ENCODE measurements at regions of chr1 and their contacts with region 1.

Region 1: GRCh38 chr1:112390775-112391602 is 5.0 kb upstream of the CTTNBP2NL start:
- DNase-seq: peak; percentile 84
- H3K4me3 ChIP-seq: peak overlapping the region; percentile 43 to 65
- H3K27ac ChIP-seq: peak overlapping the region; percentile 31 to 73; a peak in 3 of 4 replicates
- H3K4me1 ChIP-seq: peaks cover 10 to 17% of the 10 kb centered on the region in 2 experiments
- H3K27me3 ChIP-seq: no peaks in the 10 kb centered on the region
- CTCF ChIP-seq: peak; percentile 97
- EP300 ChIP-seq: no peak
- RAD21 ChIP-seq: peak; percentile 96

Region 2: GRCh38 chr1:112406771-112407170 is 15.8 kb after region 1 on chr1:
- CTCF ChIA-PET with region 1: interaction called, 12 read pairs
- POLR2A ChIA-PET with region 1: interaction called, 3 read pairs
- DNase-seq: no peak
- H3K4me3 ChIP-seq: no peak overlapping the region
- H3K27ac ChIP-seq: no peak overlapping the region
- H3K4me1 ChIP-seq: peaks cover 0 to 37% of the 10 kb centered on the region in 2 experiments; a peak in 2 of 4 replicates
- H3K27me3 ChIP-seq: no peaks in the 10 kb centered on the region
- CTCF ChIP-seq: no peak
- EP300 ChIP-seq: no peak
- RAD21 ChIP-seq: no peak

Region 3: DNA sequence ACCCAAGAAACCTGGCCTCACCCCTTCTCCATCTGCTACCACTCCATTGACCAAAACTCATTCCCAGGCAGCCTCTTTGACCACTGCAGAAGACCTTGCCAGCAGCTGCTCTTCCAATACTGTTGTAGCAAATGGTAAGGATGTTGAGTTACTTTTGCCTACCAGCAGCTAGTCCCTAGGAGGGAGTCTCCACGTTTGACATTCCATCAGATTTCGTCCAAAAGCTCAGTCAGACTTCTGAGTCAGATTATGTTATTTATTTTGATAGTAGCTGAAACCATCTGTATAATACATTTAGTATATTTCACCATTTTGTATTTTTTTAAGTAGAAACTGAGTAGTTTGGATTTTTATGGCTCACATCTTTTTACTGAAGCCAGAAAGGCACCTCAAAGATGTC is 66.3 kb after region 1 on chr1:
- CTCF ChIA-PET with region 1: interaction called, 154 read pairs
- POLR2A ChIA-PET with region 1: interaction called, 3 read pairs
- DNase-seq: no peak
- H3K4me3 ChIP-seq: no peak overlapping the region
- H3K27ac ChIP-seq: no peak overlapping the region
- H3K4me1 ChIP-seq: peaks cover 0 to 6% of the 10 kb centered on the region in 2 experiments; a peak in 1 of 4 replicates
- H3K27me3 ChIP-seq: no peaks in the 10 kb centered on the region
- CTCF ChIP-seq: no peak
- EP300 ChIP-seq: no peak
- RAD21 ChIP-seq: no peak

Region 4: GRCh38 chr1:112501810-112502641 is 111.0 kb after region 1 on chr1:
- CTCF ChIA-PET with region 1: interaction called, 30 read pairs
- POLR2A ChIA-PET with region 1: no interaction called
- DNase-seq: peak; percentile 85
- H3K4me3 ChIP-seq: peak overlapping the region; percentile 53 to 60
- H3K27ac ChIP-seq: no peak overlapping the region
- H3K4me1 ChIP-seq: peaks cover 0 to 10% of the 10 kb centered on the region in 2 experiments; a peak in 1 of 4 replicates
- H3K27me3 ChIP-seq: no peaks in the 10 kb centered on the region
- CTCF ChIP-seq: peak; percentile 77
- EP300 ChIP-seq: no peak
- RAD21 ChIP-seq: peak; percentile 70

Region 5: DNA sequence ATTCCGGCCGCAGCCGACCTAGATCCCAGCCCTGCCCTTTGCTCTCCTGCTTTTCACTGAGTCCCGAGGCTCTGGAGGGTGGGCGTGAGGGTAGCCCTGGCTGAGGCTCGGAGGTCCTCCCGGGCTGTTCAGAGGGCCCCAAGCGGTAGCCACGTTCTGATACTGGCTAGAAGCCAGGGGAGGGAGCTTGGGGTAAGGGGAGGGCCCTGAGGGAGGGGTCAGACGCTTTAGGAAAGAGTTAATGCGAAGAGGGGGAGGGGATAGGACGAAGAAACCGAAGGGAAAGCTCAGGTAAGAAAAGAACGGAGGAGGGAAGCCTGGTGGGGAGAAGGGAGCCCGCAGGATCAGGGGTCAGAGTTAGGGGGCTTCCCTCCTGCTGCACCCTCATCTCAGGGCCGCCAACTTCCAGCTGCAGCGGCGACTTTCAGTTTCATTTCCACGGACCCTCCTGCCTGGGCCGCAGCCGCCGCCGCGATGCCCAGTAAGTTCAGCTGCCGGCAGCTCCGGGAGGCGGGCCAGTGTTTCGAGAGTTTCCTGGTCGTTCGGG is 283.5 kb after region 1 on chr1 and contains the start of gene MOV10:
- CTCF ChIA-PET with region 1: interaction called, 12 read pairs
- POLR2A ChIA-PET with region 1: interaction called, 5 read pairs
- DNase-seq: peak; percentile 79
- H3K4me3 ChIP-seq: peak within 1 kb of the TSS; percentile 79 to 89
- H3K27ac ChIP-seq: peak within 1 kb of the TSS; percentile 75 to 94
- H3K4me1 ChIP-seq: peaks cover 11 to 12% of the 10 kb centered on the region in 2 experiments; a peak in 3 of 4 replicates
- H3K27me3 ChIP-seq: no peaks in the 10 kb centered on the region
- CTCF ChIP-seq: no peak
- EP300 ChIP-seq: no peak
- RAD21 ChIP-seq: no peak
- polyA plus RNA-seq, gene MOV10: 81.0 and 87.4 TPM in 2 replicates

Region 6: DNA sequence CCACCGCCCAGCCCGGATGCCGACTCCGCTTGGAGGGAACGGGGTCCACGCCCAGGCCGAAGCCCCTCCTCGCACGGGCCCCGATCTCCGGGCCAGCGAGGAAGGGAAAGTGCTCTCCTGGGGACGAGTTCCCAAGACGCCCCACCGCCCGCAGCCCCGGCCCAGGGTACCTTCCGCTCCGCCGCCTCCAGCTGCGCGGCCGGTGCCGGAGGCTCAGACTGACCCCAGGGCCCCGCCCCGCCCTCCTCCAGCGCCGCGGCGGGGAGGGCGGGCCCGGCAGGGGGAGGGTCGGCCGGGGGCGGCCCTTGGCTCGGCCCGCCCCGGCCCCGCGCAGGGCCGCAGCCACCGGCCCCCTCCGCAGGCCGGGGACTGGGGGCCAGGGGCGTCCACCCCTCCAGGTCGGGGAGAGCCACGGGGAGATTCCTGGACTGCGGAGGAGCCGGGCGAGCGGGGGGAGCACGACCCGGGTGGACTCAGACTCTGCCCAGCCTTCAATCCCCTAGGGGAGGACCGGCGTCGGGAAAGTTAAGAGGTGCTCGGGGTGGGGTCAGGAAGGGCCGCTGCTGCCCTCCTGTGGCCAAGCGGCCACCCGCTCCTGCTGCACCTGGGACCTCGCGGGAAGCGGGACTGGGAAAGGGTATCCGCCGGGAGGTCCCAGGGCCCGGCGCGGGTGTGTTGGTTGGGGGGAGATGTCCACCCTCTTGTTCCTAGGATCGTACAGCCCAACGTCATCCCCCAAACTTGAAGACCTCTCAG is 316.1 kb after region 1 on chr1 and contains the start of gene RHOC:
- CTCF ChIA-PET with region 1: interaction called, 32 read pairs
- POLR2A ChIA-PET with region 1: no interaction called
- DNase-seq: peak; percentile 96
- H3K4me3 ChIP-seq: peak within 1 kb of the TSS; percentile 93 to 94
- H3K27ac ChIP-seq: peak within 1 kb of the TSS; percentile 77 to 87
- H3K4me1 ChIP-seq: peaks cover 10 to 37% of the 10 kb centered on the region in 2 experiments; a peak in 3 of 4 replicates
- H3K27me3 ChIP-seq: no peaks in the 10 kb centered on the region
- CTCF ChIP-seq: peak; percentile 84
- EP300 ChIP-seq: no peak
- RAD21 ChIP-seq: peak; percentile 80
- polyA plus RNA-seq, gene RHOC: 961 and 1,028 TPM in 2 replicates